ENCODE measurements at regions of chr5 and their contacts with region 1.

Region 1: DNA sequence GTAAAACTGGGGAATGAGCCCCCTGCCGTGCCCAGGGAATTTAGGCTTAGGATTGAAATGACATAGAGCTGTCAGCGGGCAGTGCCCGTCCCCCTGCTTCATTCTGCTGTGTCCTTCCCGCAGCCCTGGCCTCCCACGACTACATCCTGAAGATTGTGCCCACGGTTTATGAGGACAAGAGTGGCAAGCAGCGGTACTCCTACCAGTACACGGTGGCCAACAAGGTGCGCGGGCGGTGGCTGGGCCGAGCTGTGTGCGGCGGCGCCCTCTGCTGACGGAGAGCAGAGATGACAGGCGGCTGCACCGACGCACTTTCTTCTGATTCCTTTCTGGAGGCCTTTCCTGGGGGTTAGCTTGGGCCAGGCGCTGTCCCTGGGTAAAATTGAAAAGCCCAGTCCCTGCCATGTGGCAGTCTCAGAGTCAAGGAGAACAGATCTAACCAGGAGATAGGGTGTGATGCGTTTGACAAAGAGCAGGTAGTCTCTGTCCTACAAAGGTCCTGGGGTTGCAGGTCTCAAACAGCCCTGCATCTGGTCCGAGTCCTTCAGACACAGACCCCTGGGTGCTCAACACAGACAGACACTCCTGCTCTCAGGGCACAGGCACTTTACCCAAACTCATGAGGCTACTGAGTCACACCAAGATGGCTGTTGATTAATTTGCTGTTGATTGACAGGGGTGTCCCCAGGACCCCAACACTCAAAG is 26.8 kb upstream of the RPL26L1 start:
- DNase-seq: no peak
- ATAC-seq: peak; percentile 97
- H3K4me3 ChIP-seq: no peak overlapping the region
- H3K27ac ChIP-seq: no peak overlapping the region
- H3K4me1 ChIP-seq: peaks cover 5% of the 10 kb centered on the region; the same call in 1 of the 2 replicates
- H3K27me3 ChIP-seq: no peaks in the 10 kb centered on the region
- CTCF ChIP-seq: peak; percentile 94 to 96 (median 96)
- EP300 ChIP-seq: no peak
- POLR2A ChIP-seq: no peak
- RAD21 ChIP-seq: peak; percentile 95

Region 2: GRCh38 chr5:172479044-172479783 is 453.3 kb before region 1 on chr5:
- CTCF ChIA-PET with region 1: interaction called, 3 read pairs
- POLR2A ChIA-PET with region 1: no interaction called
- RAD21 ChIA-PET with region 1: no interaction called
- SMC1A ChIA-PET with region 1: no interaction called
- in situ Hi-C with region 1: loop called (anchors 10 kb)
- intact Hi-C with region 1: loop called (anchors 5 kb)
- DNase-seq: peak; percentile 17
- ATAC-seq: peak; percentile 99
- H3K4me3 ChIP-seq: no peak overlapping the region
- H3K27ac ChIP-seq: no peak overlapping the region
- H3K4me1 ChIP-seq: no peaks in the 10 kb centered on the region
- H3K27me3 ChIP-seq: no peaks in the 10 kb centered on the region; a peak in 1 of 4 replicates
- CTCF ChIP-seq: peak; percentile 73 to 83 (median 78)
- EP300 ChIP-seq: no peak
- POLR2A ChIP-seq: no peak
- RAD21 ChIP-seq: peak; percentile 91

Region 3: GRCh38 chr5:172777881-172778814 is 154.3 kb before region 1 on chr5:
- CTCF ChIA-PET with region 1: interaction called, 44 read pairs
- POLR2A ChIA-PET with region 1: no interaction called
- RAD21 ChIA-PET with region 1: interaction called, 9 read pairs
- SMC1A ChIA-PET with region 1: interaction called, 3 read pairs
- in situ Hi-C with region 1: no loop called
- intact Hi-C with region 1: no loop called
- DNase-seq: no peak
- ATAC-seq: peak; percentile 49
- H3K4me3 ChIP-seq: peak overlapping the region; percentile 34
- H3K27ac ChIP-seq: peak overlapping the region; percentile 93
- H3K4me1 ChIP-seq: peaks cover 21% of the 10 kb centered on the region
- H3K27me3 ChIP-seq: no peaks in the 10 kb centered on the region
- CTCF ChIP-seq: no peak
- EP300 ChIP-seq: no peak
- POLR2A ChIP-seq: no peak
- RAD21 ChIP-seq: no peak

Region 4: GRCh38 chr5:172904643-172905347 is 27.7 kb before region 1 on chr5:
- CTCF ChIA-PET with region 1: interaction called, 15 read pairs
- POLR2A ChIA-PET with region 1: no interaction called
- RAD21 ChIA-PET with region 1: no interaction called
- SMC1A ChIA-PET with region 1: interaction called, 6 read pairs
- in situ Hi-C with region 1: no loop called
- intact Hi-C with region 1: no loop called
- DNase-seq: no peak
- ATAC-seq: no peak
- H3K4me3 ChIP-seq: no peak overlapping the region
- H3K27ac ChIP-seq: no peak overlapping the region
- H3K4me1 ChIP-seq: peaks cover 18% of the 10 kb centered on the region
- H3K27me3 ChIP-seq: no peaks in the 10 kb centered on the region
- CTCF ChIP-seq: no peak
- EP300 ChIP-seq: no peak
- POLR2A ChIP-seq: no peak
- RAD21 ChIP-seq: no peak

Region 5: DNA sequence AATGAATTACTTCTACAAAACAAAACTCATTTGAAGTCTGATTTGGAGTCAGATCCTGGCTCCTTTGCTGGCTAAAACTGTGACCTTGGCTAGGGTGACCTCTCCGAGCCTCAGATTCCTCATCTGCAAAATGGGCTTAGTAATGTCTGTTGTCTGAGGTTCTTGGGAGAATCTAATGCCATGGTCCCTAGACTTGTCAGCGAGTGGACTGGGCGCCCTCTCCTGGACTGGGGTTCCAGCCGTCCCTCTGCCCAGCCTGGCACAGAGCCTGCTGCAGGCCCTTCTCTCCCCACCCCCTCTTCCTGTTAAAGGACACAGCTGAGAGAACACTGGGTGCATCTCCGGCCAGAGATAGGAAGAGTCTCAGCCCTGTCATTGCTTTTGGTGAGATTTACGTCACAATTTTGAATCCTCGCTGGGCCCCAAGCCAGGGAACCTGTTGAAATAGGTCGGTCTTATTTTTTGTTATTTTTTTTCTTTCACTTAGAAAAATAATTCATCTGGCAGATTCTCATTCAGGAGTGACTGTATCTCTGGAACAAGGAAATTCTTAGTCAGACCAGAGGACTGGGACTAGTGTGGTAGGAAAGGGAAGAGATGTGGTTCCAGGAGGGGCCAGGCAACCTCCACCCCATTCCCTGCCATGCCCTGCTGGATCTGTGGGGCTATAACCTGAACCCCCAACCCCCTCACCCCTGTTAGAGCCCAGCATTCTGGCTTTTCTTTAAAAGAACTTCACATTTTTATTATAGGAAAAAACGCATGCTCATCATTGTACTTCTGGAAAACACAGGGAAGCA is 21.4 kb before region 1 on chr5:
- CTCF ChIA-PET with region 1: interaction called, 15 read pairs
- POLR2A ChIA-PET with region 1: no interaction called
- RAD21 ChIA-PET with region 1: interaction called, 4 read pairs
- SMC1A ChIA-PET with region 1: interaction called, 6 read pairs
- in situ Hi-C with region 1: no loop called
- intact Hi-C with region 1: no loop called
- DNase-seq: peak; percentile 61
- ATAC-seq: peak; percentile 91
- H3K4me3 ChIP-seq: no peak overlapping the region
- H3K27ac ChIP-seq: peak overlapping the region; percentile 83
- H3K4me1 ChIP-seq: peaks cover 23% of the 10 kb centered on the region
- H3K27me3 ChIP-seq: no peaks in the 10 kb centered on the region
- CTCF ChIP-seq: peak; percentile 38 to 61 (median 41); a peak in 4 of 6 replicates
- EP300 ChIP-seq: no peak
- POLR2A ChIP-seq: no peak
- RAD21 ChIP-seq: peak; percentile 48; the same call in 1 of the 2 replicates

Region 6: DNA sequence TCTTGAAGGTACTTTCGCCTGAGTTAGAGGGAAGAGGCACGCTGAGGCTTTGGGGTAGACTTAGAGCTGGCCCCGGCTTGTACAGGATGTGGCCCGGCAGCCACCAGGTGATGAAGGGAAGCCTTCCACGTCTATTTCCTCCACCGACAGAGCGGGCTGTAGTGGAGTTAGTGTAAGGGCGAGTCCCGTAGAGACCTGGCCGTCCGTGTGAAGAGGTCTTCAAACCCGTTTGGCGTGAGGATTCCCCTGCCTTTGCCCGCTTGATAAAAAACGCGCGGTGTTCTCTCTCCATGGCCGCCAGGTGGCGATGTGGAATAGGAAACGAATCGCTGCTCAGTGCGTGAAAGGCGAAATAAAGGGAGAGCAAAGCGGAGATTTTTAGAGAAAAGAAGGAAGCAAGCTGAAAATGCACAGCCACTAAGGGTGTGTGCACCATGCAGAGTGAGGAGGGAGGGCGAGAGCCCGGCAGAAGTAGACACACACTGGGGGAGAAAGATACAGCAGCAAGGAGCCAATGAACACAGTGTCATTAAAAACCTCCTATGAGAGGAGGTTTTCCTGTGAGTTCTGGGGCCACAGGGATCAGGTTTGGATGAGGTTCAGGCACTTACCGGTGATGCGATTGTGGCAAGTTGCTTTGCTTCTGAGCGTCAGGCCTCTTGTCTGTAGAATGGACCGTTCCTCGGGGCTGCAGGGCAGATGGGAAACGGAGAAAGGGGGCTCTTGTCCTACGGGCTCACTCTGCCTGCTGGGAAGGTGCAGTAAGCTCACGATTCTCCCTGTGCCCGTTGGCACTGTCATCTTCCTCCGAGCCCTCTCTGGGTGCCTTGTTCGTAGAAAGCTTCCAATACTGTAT is 361.6 kb after region 1 on chr5:
- CTCF ChIA-PET with region 1: no interaction called
- POLR2A ChIA-PET with region 1: no interaction called
- RAD21 ChIA-PET with region 1: no interaction called
- SMC1A ChIA-PET with region 1: no interaction called
- in situ Hi-C with region 1: no loop called
- intact Hi-C with region 1: no loop called
- DNase-seq: peak; percentile 35
- ATAC-seq: peak; percentile 88
- H3K4me3 ChIP-seq: peak overlapping the region; percentile 28; the same call in 1 of the 2 replicates
- H3K27ac ChIP-seq: 0 out of 2 replicates have a peak overlapping the region, but pooled peaks have one; percentile 41
- H3K4me1 ChIP-seq: peaks cover 26% of the 10 kb centered on the region
- H3K27me3 ChIP-seq: peaks cover 0 to 2% of the 10 kb centered on the region in 2 experiments; a peak in 2 of 4 replicates
- CTCF ChIP-seq: peak; percentile 78 to 92 (median 86)
- EP300 ChIP-seq: no peak
- POLR2A ChIP-seq: no peak
- RAD21 ChIP-seq: peak; percentile 89

Measured in GM12878 (cell line).